ENCODE measurements at regions of chr17 and their contacts with region 1.

Region 1: GRCh38 chr17:82781894-82782274 is 30.0 kb downstream of the TBCD start:
- DNase-seq: peak; percentile 77 to 90 (median 86)
- ATAC-seq: peak; percentile 100
- H3K4me3 ChIP-seq: no peak overlapping the region
- H3K4me3 Mint-ChIP-seq: no peak overlapping the region
- H3K27ac ChIP-seq: no peak overlapping the region
- H3K27ac Mint-ChIP-seq: peak overlapping the region; percentile 69
- H3K4me1 ChIP-seq: peaks cover 13% of the 10 kb centered on the region
- H3K4me1 Mint-ChIP-seq: peaks cover 12% of the 10 kb centered on the region
- H3K27me3 ChIP-seq: no peaks in the 10 kb centered on the region
- H3K27me3 Mint-ChIP-seq: no peaks in the 10 kb centered on the region
- CTCF ChIP-seq: peak; percentile 97

Region 2: DNA sequence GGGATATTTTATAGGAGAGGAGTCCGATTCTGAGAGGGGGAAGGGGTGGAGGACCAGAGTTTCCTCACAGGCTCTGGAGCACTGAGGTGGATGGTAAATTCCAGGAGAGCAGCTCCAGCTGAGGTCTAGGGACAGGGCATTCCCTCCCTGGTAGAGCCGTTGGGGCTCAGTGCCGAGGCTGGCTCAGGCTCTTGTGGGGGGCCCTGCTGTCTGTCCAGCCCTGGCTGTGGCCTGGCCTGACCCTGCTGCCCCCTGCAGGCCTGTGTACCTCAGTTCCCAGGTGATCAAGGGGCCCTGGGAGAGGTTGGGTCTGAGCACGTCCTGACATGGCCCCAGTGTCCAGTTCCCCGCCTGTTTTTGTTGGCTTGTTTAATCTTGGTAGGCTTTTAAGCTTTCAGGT is 41.1 kb after region 1 on chr17:
- CTCF ChIA-PET with region 1: no interaction called
- POLR2A ChIA-PET with region 1: no interaction called
- intact Hi-C with region 1: no loop called
- DNase-seq: no peak
- ATAC-seq: no peak
- H3K4me3 ChIP-seq: no peak overlapping the region
- H3K4me3 Mint-ChIP-seq: no peak overlapping the region
- H3K27ac ChIP-seq: no peak overlapping the region
- H3K27ac Mint-ChIP-seq: no peak overlapping the region
- H3K4me1 ChIP-seq: peaks cover 3% of the 10 kb centered on the region
- H3K4me1 Mint-ChIP-seq: no peaks in the 10 kb centered on the region
- H3K27me3 ChIP-seq: no peaks in the 10 kb centered on the region
- H3K27me3 Mint-ChIP-seq: no peaks in the 10 kb centered on the region
- CTCF ChIP-seq: no peak

Region 3: DNA sequence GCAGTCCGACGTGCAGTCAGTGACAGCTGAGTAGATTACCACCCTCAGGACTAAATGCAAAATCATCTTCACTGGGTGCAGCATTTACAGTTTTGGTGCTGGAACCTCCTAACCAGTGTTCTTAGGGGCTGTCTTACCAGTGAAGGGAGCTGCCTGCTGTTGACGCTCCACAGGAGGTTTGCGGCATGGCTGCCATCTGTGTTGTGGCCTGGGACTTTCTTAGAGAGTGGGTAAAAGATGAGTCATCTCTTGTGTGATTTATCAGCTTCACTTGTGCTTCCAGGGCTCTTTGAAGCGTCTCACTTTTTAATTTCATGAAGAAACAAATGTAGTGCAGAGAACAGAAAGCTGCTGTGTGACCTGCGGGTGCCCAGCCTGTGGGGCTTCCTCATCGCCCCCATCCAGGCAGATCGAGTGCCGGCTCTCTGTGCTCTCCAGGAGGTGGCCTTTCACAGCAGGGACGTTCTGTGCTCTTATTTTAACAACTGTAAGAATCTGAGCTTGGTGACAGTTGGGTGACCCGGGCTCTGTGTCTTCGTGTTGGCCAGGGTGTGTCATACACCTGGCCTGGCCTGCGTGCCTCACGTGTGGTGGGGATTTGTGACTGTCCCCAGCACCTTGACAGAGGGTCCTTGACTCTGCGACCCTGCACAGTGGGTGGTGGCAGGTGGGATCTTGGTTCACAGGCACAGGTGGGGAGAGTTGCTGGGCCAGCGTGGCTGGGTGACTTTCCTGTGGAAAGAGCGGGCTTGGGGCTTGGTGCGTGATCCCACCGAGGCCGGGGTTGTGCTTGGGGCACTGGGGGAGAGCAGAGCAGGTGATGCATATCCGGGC is 82.3 kb after region 1 on chr17:
- CTCF ChIA-PET with region 1: interaction called, 8 read pairs
- POLR2A ChIA-PET with region 1: interaction called, 3 read pairs
- intact Hi-C with region 1: loop called (anchors 1 to 5 kb)
- DNase-seq: peak; percentile 71 to 96 (median 85)
- ATAC-seq: peak; percentile 90
- H3K4me3 ChIP-seq: peak overlapping the region; percentile 19
- H3K4me3 Mint-ChIP-seq: peak overlapping the region; percentile 32
- H3K27ac ChIP-seq: peak overlapping the region; percentile 75 to 85
- H3K27ac Mint-ChIP-seq: peak overlapping the region; percentile 97
- H3K4me1 ChIP-seq: peaks cover 87% of the 10 kb centered on the region
- H3K4me1 Mint-ChIP-seq: peaks cover 53% of the 10 kb centered on the region
- H3K27me3 ChIP-seq: no peaks in the 10 kb centered on the region
- H3K27me3 Mint-ChIP-seq: no peaks in the 10 kb centered on the region
- CTCF ChIP-seq: no peak

Region 4: GRCh38 chr17:82892899-82893565 is 111.1 kb after region 1 on chr17:
- CTCF ChIA-PET with region 1: interaction called, 4 read pairs
- POLR2A ChIA-PET with region 1: no interaction called
- intact Hi-C with region 1: loop called in 1 of 2 experiments (anchors 2 kb)
- DNase-seq: peak; percentile 62 to 91 (median 73)
- ATAC-seq: peak; percentile 97
- H3K4me3 ChIP-seq: peak overlapping the region; percentile 30
- H3K4me3 Mint-ChIP-seq: peak overlapping the region; percentile 80
- H3K27ac ChIP-seq: peak overlapping the region; percentile 13 to 49
- H3K27ac Mint-ChIP-seq: peak overlapping the region; percentile 95
- H3K4me1 ChIP-seq: peaks cover 39% of the 10 kb centered on the region
- H3K4me1 Mint-ChIP-seq: peaks cover 26% of the 10 kb centered on the region
- H3K27me3 ChIP-seq: no peaks in the 10 kb centered on the region
- H3K27me3 Mint-ChIP-seq: no peaks in the 10 kb centered on the region
- CTCF ChIP-seq: no peak

Region 5: DNA sequence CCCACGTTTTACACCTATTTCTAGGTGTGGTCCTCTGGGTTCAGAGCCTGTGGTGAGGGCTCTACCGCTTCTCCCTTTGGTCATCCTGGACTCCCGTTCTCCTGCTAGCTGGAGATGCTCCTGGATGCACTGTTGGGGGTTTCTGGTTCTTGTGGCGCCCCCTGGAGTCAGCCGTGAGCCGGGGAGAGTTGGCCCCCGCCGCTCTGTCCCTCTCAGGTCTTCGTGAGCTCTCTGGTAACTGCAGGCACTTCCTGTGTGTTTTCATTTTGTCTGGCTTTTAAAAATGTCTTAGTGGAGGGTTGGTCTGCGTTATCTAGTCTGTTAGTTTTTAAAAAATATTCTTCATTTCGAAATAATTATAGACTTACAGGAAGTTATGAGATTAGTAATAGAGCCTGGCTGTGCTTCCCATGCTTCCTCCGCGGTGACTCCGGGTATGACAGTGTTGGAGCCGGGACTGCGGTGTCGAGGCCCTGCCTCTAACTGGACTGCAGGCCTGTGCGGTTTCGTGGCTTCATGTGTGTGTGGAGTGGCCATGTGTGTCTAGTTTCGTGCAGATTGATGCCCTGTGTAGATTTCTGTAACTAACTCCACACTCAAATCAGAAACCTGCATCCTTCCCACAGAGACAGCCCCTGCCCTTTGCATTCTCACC is 135.9 kb after region 1 on chr17:
- CTCF ChIA-PET with region 1: interaction called, 5 read pairs
- POLR2A ChIA-PET with region 1: no interaction called
- intact Hi-C with region 1: loop called (anchors 1 kb)
- DNase-seq: peak in 11 of 14 experiments; percentile 6 to 62 (median 34)
- ATAC-seq: no peak
- H3K4me3 ChIP-seq: no peak overlapping the region
- H3K4me3 Mint-ChIP-seq: no peak overlapping the region
- H3K27ac ChIP-seq: no peak overlapping the region
- H3K27ac Mint-ChIP-seq: no peak overlapping the region
- H3K4me1 ChIP-seq: no peaks in the 10 kb centered on the region
- H3K4me1 Mint-ChIP-seq: no peaks in the 10 kb centered on the region
- H3K27me3 ChIP-seq: no peaks in the 10 kb centered on the region
- H3K27me3 Mint-ChIP-seq: no peaks in the 10 kb centered on the region
- CTCF ChIP-seq: peak; percentile 31

Region 6: DNA sequence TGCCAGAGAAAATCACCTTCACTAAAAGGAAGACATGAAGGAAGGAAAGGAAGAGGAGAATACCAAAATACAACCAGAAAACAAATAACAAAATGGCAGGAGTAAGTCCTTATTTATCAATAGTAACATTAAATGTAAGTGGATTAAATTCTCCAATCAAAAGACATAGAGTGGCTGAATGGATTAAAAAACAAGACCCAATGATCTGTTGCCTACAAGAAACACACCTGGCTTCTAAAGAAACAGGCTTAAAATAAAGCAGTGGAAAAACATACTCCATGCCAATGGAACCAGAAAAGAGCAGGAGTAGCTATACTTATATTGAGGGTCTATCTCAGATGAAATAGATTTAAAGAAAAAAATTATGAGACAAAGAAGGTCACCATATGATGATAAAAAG is 211.1 kb after region 1 on chr17:
- CTCF ChIA-PET with region 1: no interaction called
- POLR2A ChIA-PET with region 1: no interaction called
- intact Hi-C with region 1: loop called in 1 of 2 experiments (anchors 10 kb)
- DNase-seq: no peak
- ATAC-seq: no peak
- H3K4me3 ChIP-seq: no peak overlapping the region
- H3K4me3 Mint-ChIP-seq: no peak overlapping the region
- H3K27ac ChIP-seq: no peak overlapping the region
- H3K27ac Mint-ChIP-seq: no peak overlapping the region
- H3K4me1 ChIP-seq: no peaks in the 10 kb centered on the region
- H3K4me1 Mint-ChIP-seq: peaks cover 26% of the 10 kb centered on the region
- H3K27me3 ChIP-seq: no peaks in the 10 kb centered on the region
- H3K27me3 Mint-ChIP-seq: no peaks in the 10 kb centered on the region
- CTCF ChIP-seq: no peak

Region 7: GRCh38 chr17:83041305-83041704 is 259.4 kb after region 1 on chr17:
- CTCF ChIA-PET with region 1: no interaction called
- POLR2A ChIA-PET with region 1: no interaction called
- intact Hi-C with region 1: loop called in 1 of 2 experiments (anchors 10 kb)
- DNase-seq: no peak
- ATAC-seq: no peak
- H3K4me3 ChIP-seq: no peak overlapping the region
- H3K4me3 Mint-ChIP-seq: no peak overlapping the region
- H3K27ac ChIP-seq: no peak overlapping the region
- H3K27ac Mint-ChIP-seq: no peak overlapping the region
- H3K4me1 ChIP-seq: peaks cover 3% of the 10 kb centered on the region
- H3K4me1 Mint-ChIP-seq: peaks cover 26% of the 10 kb centered on the region
- H3K27me3 ChIP-seq: no peaks in the 10 kb centered on the region
- H3K27me3 Mint-ChIP-seq: no peaks in the 10 kb centered on the region
- CTCF ChIP-seq: no peak

Region 8: DNA sequence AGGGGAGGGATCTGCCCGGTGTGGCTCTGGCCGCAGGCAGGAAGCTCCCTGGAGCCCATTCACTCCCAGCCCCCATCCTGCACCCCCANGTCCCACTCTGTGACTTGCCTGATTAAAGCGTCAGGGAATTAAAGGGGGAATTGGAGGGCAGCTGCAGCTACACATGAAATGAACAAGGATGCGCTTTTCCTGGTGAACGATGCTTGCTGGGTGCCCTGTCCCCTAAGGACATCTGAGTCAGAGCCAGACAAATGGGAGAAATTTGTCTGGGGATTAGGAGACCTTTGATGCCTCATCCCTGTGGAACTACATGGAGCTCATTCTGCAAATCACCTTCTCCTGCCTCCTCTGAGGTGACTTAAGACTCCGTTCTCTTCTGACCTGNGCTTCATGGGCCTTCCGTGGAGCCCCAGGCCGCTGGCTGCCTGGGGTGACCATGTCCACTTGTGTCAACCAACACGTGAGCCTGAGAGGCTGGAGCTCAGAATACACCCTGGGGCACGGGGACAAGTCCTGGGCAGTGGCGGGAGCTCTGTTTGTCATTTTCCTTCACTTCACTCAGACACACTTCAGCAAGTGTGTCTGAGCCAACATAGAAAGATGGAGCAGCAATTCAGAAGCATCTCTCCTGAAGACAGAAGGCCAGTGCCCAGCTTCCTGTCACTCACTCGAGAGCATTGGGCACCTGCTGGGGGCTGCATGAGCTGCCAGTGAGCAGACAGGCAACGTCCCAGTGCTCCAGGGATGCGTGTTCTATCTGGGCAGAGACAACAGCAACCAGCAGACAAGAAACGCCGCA is 351.6 kb after region 1 on chr17:
- CTCF ChIA-PET with region 1: no interaction called
- POLR2A ChIA-PET with region 1: no interaction called
- intact Hi-C with region 1: loop called in 1 of 2 experiments (anchors 5 kb)
- DNase-seq: no peak
- ATAC-seq: no peak
- H3K4me3 ChIP-seq: no peak overlapping the region
- H3K4me3 Mint-ChIP-seq: no peak overlapping the region
- H3K27ac ChIP-seq: no peak overlapping the region
- H3K27ac Mint-ChIP-seq: no peak overlapping the region
- H3K4me1 ChIP-seq: no peaks in the 10 kb centered on the region
- H3K4me1 Mint-ChIP-seq: no peaks in the 10 kb centered on the region
- H3K27me3 ChIP-seq: peaks cover 0 to 4% of the 10 kb centered on the region in 2 experiments
- H3K27me3 Mint-ChIP-seq: peaks cover 5% of the 10 kb centered on the region
- CTCF ChIP-seq: no peak

Measured in CD4-positive, alpha-beta T cell (primary cell).